A549 (cell line): ENCODE measurements at regions of chr11 and their contacts with region 1.

Region 1: DNA sequence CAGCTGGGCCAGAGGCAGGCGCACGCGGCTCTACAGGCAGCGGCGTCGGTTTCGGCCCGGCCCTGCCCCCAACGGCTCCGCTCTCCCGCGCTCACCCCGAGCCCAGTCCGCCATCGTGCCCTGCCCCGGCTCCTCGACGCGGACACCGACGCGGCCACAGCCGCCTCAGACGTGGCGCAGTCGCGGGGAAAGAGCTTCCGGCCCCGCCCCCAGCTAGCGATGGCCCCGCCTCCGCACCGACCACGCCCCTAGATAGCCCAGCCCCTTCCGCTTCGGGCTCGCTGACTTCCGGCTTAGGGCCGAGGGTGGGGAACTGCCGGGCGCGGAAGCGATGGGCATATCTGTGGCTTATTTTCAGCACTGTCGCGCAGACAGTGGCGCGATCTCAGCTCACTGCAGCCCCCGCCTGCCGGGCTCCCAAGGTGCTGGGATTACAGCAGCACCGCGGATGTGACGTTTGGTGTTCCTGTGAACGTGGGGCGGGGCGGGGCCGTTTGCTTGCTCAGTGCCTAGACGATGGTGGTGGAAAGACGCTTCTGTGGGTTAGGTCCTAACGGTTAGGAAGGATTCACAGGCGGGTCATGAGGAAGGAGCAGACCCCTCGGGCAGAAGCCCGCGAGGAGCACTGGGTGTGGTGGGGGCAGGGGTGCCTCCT is at the starts of genes BET1L and RIC8A:
- DNase-seq: peak; percentile 96 to 99
- ATAC-seq: peak; percentile 72 to 84
- H3K4me3 ChIP-seq: peak within 1 kb of the TSS; percentile 100
- H3K27ac ChIP-seq: peak within 1 kb of the TSS; percentile 90 to 94
- H3K4me1 ChIP-seq: peaks cover 26% of the 10 kb centered on the region
- CTCF ChIP-seq: no peak
- EP300 ChIP-seq: no peak
- POLR2A ChIP-seq: peak; percentile 96
- RAD21 ChIP-seq: no peak
- polyA plus RNA-seq, gene BET1L: 44.5 and 54.0 TPM in 2 replicates
- polyA plus RNA-seq, gene RIC8A: 82.0 and 119 TPM in 2 replicates

Region 2: GRCh38 chr11:196786-197719 is 10.3 kb before region 1 on chr11:
- CTCF ChIA-PET with region 1: interaction called, 3 read pairs
- POLR2A ChIA-PET with region 1: interaction called, 15 read pairs
- DNase-seq: no peak
- ATAC-seq: peak in 1 of 2 experiments; percentile 20; a peak in 3 of 6 replicates
- H3K4me3 ChIP-seq: no peak overlapping the region
- H3K27ac ChIP-seq: no peak overlapping the region
- H3K4me1 ChIP-seq: no peaks in the 10 kb centered on the region
- CTCF ChIP-seq: no peak
- EP300 ChIP-seq: no peak
- POLR2A ChIP-seq: no peak
- RAD21 ChIP-seq: no peak

Region 3: GRCh38 chr11:312092-312816 is 104.9 kb after region 1 on chr11:
- CTCF ChIA-PET with region 1: no interaction called
- POLR2A ChIA-PET with region 1: no interaction called
- DNase-seq: no peak
- ATAC-seq: no peak
- H3K4me3 ChIP-seq: no peak overlapping the region
- H3K27ac ChIP-seq: peak overlapping the region in 1 of 2 experiments; percentile 48; a peak in 1 of 6 replicates
- H3K4me1 ChIP-seq: peaks cover 18% of the 10 kb centered on the region; the same call in 2 of the 3 replicates
- CTCF ChIP-seq: no peak
- EP300 ChIP-seq: no peak
- POLR2A ChIP-seq: no peak
- RAD21 ChIP-seq: no peak

Region 4: GRCh38 chr11:326842-327580 is 119.7 kb after region 1 on chr11:
- CTCF ChIA-PET with region 1: no interaction called
- POLR2A ChIA-PET with region 1: no interaction called
- DNase-seq: no peak
- ATAC-seq: peak in 1 of 2 experiments; percentile 13; a peak in 1 of 6 replicates
- H3K4me3 ChIP-seq: no peak overlapping the region
- H3K27ac ChIP-seq: peak overlapping the region in 1 of 2 experiments; percentile 57; a peak in 3 of 6 replicates
- H3K4me1 ChIP-seq: peaks cover 9% of the 10 kb centered on the region; the same call in 1 of the 3 replicates
- CTCF ChIP-seq: no peak
- EP300 ChIP-seq: no peak
- POLR2A ChIP-seq: no peak
- RAD21 ChIP-seq: no peak

Region 5: DNA sequence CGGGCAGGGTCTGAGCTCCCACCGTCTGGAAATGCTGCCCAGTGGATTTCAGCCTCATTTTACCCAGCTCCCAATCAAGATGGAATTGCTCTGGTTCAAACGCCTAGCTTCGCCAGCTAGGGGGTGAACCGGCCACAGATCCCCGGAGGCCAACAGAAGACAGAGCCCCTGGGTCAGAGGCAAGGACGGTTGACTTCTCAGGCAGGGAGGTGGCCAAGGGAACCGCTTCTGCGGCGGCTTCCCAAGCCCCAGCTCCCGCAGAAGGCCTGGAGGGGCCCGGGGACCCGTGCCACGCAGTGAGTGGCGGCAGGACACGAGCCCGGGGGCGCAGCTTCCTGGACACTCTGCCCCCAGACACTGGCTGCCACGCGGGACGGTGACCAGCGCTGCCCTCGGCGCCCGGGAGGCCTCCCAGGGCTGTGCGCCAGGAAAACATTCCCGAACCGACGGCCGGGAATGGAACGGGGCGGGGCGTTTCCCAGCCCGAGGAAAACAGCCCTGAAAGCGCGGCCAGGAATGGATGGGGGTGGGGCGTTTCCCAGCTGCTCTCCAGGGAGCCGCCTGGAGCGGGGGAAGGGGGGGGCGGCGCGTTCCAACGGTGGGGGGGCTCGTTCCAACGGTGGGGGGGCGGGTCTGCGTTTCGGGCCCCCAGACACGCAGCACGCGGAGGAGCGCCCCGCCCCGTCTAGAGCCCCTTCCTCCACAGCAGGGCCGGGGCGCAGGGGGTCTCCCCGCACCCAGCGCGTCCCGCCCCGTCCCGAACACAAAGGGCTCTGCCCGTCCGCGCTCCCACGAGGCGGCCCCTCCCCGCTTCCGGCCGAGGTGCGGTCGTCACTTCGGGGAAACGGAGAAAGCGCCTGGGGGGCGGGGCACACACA is 148.5 kb after region 1 on chr11:
- CTCF ChIA-PET with region 1: no interaction called
- POLR2A ChIA-PET with region 1: interaction called, 21 read pairs
- DNase-seq: peak; percentile 84 to 92
- ATAC-seq: peak; percentile 91 to 94
- H3K4me3 ChIP-seq: peak overlapping the region; percentile 47
- H3K27ac ChIP-seq: peak overlapping the region; percentile 98 to 99
- H3K4me1 ChIP-seq: peaks cover 21% of the 10 kb centered on the region
- CTCF ChIP-seq: no peak
- EP300 ChIP-seq: peak in 1 of 2 experiments; percentile 73; a peak in 2 of 5 replicates
- POLR2A ChIP-seq: peak; percentile 61
- RAD21 ChIP-seq: no peak

Region 6: GRCh38 chr11:541414-541885 is 334.1 kb after region 1 on chr11:
- CTCF ChIA-PET with region 1: no interaction called
- POLR2A ChIA-PET with region 1: no interaction called
- DNase-seq: no peak
- ATAC-seq: no peak
- H3K4me3 ChIP-seq: no peak overlapping the region
- H3K27ac ChIP-seq: no peak overlapping the region
- H3K4me1 ChIP-seq: no peaks in the 10 kb centered on the region
- CTCF ChIP-seq: no peak
- EP300 ChIP-seq: no peak
- POLR2A ChIP-seq: no peak
- RAD21 ChIP-seq: no peak

Region 7: DNA sequence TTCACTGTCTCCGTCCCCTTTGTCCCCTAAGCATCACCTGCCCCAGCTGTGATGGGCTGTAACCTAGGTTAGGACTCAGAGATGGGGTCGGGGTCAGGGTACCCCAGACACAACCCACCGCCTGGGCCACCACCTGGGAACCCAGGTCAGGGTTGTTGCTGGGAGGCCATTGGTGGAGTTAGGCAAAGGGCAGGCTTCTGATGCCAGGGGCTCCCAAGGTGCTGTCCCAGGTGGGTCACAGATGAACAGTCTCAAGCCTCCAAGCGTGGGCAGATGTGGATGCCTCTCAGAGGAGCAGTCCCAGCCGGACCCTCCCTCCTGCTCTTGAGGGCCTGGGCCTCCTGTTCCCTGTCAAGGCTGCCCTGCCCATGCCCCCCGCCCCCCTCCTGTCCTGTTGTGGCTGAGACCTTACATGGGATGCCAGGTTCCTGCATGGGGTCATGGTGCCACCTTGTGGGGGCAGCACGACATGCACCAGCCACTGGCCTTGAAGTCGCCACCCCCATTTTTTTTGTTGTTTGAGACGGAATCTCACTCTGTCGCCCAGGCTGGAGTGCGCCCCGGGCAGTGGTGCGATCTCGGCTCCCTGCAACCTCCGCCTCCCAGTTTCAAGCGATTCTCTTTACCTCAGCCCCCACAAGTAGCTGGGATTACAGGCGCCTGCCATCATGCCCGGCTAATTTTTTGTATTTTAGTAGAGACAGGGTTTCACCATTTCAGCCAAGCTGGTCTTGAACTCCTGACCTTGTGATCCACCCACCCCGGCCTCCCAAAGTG is 557.9 kb after region 1 on chr11:
- CTCF ChIA-PET with region 1: no interaction called
- POLR2A ChIA-PET with region 1: no interaction called
- DNase-seq: peak; percentile 60 to 82
- ATAC-seq: peak; percentile 63 to 64
- H3K4me3 ChIP-seq: no peak overlapping the region
- H3K27ac ChIP-seq: peak overlapping the region in 1 of 2 experiments; percentile 56; a peak in 2 of 6 replicates
- H3K4me1 ChIP-seq: peaks cover 29% of the 10 kb centered on the region
- CTCF ChIP-seq: peak; percentile 64
- EP300 ChIP-seq: no peak
- POLR2A ChIP-seq: no peak
- RAD21 ChIP-seq: peak; percentile 59 to 69